Mammary epithelial cell (primary cell): ENCODE measurements at regions of chr7 and their contacts with region 1.

Region 1: GRCh38 chr7:786472-787255 is 45.6 kb upstream of the SUN1 start:
- DNase-seq: peak; percentile 34
- H3K4me3 ChIP-seq: no peak overlapping the region
- H3K27ac ChIP-seq: no peak overlapping the region
- H3K4me1 ChIP-seq: no peaks in the 10 kb centered on the region
- H3K27me3 ChIP-seq: no peaks in the 10 kb centered on the region
- CTCF ChIP-seq: peak; percentile 80 to 97

Region 2: DNA sequence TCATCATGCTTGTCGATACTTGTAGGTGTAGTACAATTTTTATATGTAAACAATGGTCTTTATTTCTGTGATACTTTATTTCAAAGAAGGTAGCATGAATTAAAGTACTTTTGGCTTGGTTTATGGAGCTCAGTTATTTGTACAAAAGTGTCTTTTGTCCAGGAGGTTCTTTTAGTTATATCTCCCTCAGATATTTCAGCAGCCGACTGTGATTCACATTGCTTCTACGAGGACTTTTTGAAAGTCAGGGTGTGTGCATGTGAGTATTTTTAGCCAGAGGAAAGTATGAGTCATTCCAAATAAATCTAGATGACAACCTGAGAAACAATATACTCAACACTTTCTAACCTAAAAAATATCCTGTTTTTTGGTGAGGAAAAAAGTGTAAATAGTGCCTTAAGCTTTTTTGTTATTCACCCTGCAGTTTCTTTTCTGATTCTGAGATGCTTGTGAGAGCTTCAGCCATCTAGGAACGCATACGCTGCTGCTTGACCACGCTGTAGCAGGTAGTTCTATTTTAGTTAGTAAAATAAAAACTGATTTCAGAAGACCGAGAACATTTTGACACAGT is 45.0 kb after region 1 on chr7:
- CTCF ChIA-PET with region 1: no interaction called
- dilution Hi-C with region 1: no loop called
- in situ Hi-C with region 1: no loop called
- intact Hi-C with region 1: loop called (anchors 1 kb)
- DNase-seq: peak; percentile 93
- H3K4me3 ChIP-seq: peak overlapping the region in 2 of 3 experiments; percentile 36 to 41
- H3K27ac ChIP-seq: peak overlapping the region; percentile 100
- H3K4me1 ChIP-seq: peaks cover 50% of the 10 kb centered on the region
- H3K27me3 ChIP-seq: no peaks in the 10 kb centered on the region
- CTCF ChIP-seq: no peak

Region 3: DNA sequence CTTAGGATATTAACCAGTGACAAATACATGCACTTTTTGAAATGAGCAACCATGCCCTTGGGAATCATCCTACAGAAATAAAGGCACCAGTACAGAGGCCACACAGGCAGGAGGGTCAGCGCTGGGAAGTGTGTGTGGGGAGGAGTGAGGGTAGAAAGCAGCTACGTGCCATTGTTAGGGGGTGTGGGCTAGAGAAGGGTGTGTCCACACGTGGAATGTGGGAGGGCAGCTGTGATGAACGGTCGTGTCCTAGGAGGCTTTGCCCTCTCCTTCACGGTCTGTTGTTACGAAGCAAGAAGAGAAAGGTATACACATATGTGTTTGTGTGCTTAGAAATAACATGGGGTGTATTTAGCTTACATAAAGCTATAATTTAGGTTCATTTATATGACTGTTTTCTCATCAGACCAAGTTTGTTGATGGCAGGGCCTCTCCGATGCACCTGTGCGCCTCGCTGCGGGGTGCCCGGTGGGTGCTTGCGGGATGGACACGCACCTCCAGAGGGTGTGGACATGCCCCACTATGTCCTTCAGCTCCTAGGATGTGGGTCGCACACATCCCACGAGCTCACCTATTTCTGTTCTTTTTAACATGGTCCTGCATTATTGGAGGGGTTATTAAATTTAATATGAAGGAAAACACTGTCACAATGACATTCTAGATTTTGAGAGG is 72.8 kb after region 1 on chr7:
- CTCF ChIA-PET with region 1: no interaction called
- dilution Hi-C with region 1: loop called (anchors 5 kb)
- in situ Hi-C with region 1: no loop called
- intact Hi-C with region 1: no loop called
- DNase-seq: no peak
- H3K4me3 ChIP-seq: no peak overlapping the region
- H3K27ac ChIP-seq: no peak overlapping the region
- H3K4me1 ChIP-seq: no peaks in the 10 kb centered on the region
- H3K27me3 ChIP-seq: no peaks in the 10 kb centered on the region
- CTCF ChIP-seq: no peak

Region 4: DNA sequence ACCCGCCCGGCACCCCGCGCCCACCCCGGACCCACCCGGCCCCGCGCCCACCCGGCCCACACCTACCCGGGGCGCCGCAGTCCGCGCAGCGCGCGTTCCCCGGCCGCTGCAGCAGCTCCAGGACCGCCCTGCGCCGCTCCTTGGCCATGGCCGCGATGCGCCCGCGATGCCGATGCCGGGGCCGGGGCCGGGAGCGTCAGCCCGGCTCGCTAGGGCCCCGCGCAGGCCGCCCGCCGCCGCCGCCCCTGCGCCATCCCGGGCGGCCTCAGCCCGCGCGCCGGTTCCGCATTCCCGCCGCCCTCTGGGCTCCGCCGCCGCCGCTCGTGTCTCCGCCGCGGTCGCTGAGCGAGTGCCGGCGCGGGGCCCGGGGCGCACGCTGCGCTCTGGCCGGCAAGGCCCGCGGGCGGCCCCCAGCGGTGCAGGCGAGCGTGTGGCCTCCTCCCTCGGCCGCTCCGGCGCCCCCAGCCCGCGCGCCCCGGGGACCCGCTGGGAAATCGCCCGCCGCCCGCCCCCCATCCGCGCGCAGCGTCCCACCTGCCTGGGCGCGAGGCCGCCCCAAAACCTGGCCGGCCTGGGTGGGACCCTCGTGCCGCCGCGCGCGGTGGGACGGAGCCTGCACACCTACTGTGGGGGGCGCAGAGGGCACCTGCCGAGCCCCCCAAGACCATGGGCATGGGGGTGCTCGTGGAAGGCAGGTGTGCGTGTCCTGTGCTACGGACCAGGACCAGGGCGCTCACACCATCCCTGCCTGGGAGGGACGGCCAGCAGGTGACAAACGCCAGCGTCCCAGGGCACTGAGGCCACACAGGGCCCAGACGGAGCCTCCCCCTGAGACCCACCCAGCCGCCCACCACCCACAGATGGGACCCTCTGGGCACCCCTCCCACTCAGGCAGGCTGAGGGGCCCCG is 167.9 kb after region 1 on chr7 and contains the start of gene ADAP1:
- CTCF ChIA-PET with region 1: no interaction called
- dilution Hi-C with region 1: no loop called
- in situ Hi-C with region 1: no loop called
- intact Hi-C with region 1: loop called (anchors 1 kb)
- DNase-seq: peak; percentile 41
- H3K4me3 ChIP-seq: peak within 1 kb of the TSS; percentile 59 to 68 (median 66)
- H3K27ac ChIP-seq: no peak within 1 kb of the TSS
- H3K4me1 ChIP-seq: peaks cover 14% of the 10 kb centered on the region
- H3K27me3 ChIP-seq: no peaks in the 10 kb centered on the region
- CTCF ChIP-seq: peak in 1 of 2 donors; percentile 41
- total RNA-seq, gene ADAP1: 11.0 to 21.4 TPM